Activated B cell treated with CpG ODN at 0.5 μM for 24 hours (primary cell): ENCODE measurements at regions of chr7 and their contacts with region 1.

Region 1: GRCh38 chr7:141014524-141015395 is at the start of gene MRPS33:
- DNase-seq: peak; percentile 86
- ATAC-seq: peak; percentile 98
- H3K4me3 Mint-ChIP-seq: peak within 1 kb of the TSS; percentile 99
- H3K27ac Mint-ChIP-seq: peak within 1 kb of the TSS; percentile 100
- H3K4me1 Mint-ChIP-seq: peaks cover 20% of the 10 kb centered on the region
- H3K27me3 Mint-ChIP-seq: peaks cover 13% of the 10 kb centered on the region
- CTCF ChIP-seq: no peak
- total RNA-seq, gene MRPS33: 37.5 and 46.4 TPM in 2 replicates

Region 2: DNA sequence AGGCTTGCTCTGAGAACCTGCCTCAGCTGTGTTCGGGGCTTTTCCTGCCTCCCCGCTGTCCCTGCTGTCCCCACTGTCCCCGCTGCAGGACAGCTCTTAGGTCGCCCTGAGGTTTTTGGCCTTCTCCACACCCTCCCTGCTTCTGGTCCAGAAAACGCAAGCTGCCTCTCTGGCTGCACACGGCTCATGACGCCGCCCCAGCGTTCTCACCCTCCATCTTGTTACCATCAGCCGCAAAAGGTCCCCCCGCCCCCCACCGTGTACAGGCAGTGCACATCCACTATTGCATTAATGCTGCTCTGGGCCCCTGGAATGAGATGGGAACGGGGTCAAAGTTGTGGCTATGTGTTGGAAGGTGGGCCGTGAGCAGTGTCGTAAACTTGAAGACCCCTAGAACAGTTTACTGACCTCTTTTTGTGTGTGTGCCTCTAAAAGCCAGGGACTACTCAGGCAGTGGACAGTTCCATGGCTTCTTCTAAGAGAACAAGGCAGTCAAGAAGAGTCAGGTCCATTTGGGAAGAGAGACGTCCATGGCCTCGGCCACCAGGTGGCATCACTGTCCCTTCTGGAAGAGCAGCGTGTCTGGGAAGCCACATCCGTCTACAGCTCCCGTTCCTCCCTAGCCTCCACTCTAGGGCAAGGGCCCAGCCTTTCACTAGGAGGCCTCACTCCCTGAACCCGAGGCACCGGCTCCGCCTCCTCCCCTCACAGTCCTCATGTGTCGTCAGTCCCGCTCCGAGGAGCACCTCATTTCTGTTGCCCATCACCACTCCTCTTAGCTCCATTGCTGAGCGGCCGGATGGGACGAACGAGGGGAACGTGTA is 497.0 kb before region 1 on chr7:
- CTCF ChIA-PET with region 1: interaction called, 7 read pairs
- POLR2A ChIA-PET with region 1: no interaction called
- intact Hi-C with region 1: loop called (anchors 1 kb)
- DNase-seq: peak; percentile 57
- ATAC-seq: peak; percentile 67
- H3K4me3 Mint-ChIP-seq: peak overlapping the region; percentile 42
- H3K27ac Mint-ChIP-seq: no peak overlapping the region
- H3K4me1 Mint-ChIP-seq: peaks cover 4% of the 10 kb centered on the region
- H3K27me3 Mint-ChIP-seq: peaks cover 11% of the 10 kb centered on the region
- CTCF ChIP-seq: no peak

Region 3: GRCh38 chr7:140673063-140673773 is 341.5 kb before region 1 on chr7:
- CTCF ChIA-PET with region 1: interaction called, 3 read pairs
- POLR2A ChIA-PET with region 1: interaction called, 4 read pairs
- intact Hi-C with region 1: loop called (anchors 1 kb)
- DNase-seq: peak; percentile 67
- ATAC-seq: peak; percentile 58
- H3K4me3 Mint-ChIP-seq: peak overlapping the region; percentile 88
- H3K27ac Mint-ChIP-seq: peak overlapping the region; percentile 86
- H3K4me1 Mint-ChIP-seq: peaks cover 57% of the 10 kb centered on the region
- H3K27me3 Mint-ChIP-seq: no peaks in the 10 kb centered on the region
- CTCF ChIP-seq: no peak

Region 4: DNA sequence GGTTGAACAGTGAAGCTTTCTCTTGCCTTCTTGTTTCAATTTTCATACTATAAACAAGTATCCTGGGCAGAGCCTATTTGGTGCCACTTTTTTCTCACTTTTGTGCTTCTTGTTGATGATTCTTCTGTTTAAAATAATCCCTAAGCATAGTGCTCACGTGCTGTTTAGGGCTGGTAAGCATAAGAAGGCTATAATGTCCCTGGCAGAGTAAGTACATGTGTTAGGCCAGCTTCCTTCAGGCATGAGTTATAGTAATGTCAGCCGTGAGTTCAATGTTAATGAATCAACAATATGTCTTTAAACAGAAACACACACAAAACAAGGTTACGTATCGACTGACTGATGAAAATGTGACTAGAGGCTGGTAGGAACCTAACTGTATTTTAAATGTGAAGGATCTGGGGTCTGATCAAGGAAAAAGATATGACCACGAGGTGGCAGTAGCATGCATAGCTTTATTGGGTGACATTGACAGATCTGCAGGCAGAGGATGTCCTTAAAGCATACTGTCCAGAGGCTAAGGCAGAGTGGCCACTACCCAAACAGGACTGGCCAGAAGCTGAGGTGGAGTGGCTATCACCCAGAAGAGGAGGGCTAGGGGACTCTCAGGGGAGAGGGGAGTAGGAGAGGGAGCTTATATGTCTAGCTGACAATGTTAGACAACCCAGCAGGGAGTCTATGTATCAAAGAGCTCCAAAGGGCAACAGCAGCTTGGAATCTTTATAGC is 203.8 kb before region 1 on chr7:
- CTCF ChIA-PET with region 1: interaction called, 151 read pairs
- POLR2A ChIA-PET with region 1: interaction called, 8 read pairs
- intact Hi-C with region 1: loop called (anchors 1 kb)
- DNase-seq: peak; percentile 30
- ATAC-seq: peak; percentile 84
- H3K4me3 Mint-ChIP-seq: no peak overlapping the region
- H3K27ac Mint-ChIP-seq: peak overlapping the region; percentile 59
- H3K4me1 Mint-ChIP-seq: peaks cover 1% of the 10 kb centered on the region
- H3K27me3 Mint-ChIP-seq: no peaks in the 10 kb centered on the region
- CTCF ChIP-seq: no peak

Region 5: DNA sequence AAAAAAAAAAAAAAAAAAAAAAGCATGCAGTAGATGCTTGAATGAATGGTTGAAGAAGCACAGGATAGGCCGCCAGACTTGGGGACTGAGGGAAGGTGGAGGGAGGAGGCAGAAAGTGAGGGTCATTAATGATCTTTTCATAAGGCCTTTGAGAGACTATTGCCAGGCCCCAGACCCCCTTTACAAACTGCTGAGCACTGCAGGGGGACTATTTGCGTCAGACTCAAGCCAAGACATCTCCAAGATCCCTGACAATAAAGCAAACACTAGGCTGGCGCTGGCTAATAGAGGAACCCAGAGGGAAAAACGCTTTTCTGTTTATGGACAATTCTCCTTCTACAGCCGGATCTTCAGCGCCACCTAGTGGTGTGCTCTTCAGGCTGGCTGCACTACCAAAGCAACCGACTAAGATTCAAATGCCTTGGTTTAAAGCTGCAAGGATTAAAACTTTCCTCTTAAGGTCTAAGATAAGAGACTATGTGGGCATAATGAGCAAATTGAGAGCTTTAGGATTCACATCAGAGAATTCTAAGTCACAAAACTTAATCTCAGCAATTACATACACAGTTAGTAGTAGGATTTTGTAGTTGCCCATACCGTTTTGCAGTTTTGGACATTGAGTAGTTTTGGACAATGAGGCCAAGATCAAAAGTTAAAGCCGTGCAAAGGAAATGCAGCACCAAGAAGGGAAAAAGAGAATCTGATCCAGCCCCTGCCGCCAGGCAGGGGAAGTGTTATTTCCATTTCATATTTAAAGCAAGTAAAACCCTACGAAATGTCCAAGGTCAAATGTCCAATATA is 518.6 kb after region 1 on chr7:
- CTCF ChIA-PET with region 1: no interaction called
- POLR2A ChIA-PET with region 1: no interaction called
- intact Hi-C with region 1: loop called (anchors 2 kb)
- DNase-seq: peak; percentile 29
- ATAC-seq: peak; percentile 45
- H3K4me3 Mint-ChIP-seq: no peak overlapping the region
- H3K27ac Mint-ChIP-seq: no peak overlapping the region
- H3K4me1 Mint-ChIP-seq: no peaks in the 10 kb centered on the region
- H3K27me3 Mint-ChIP-seq: peaks cover 23% of the 10 kb centered on the region
- CTCF ChIP-seq: peak; percentile 54

Region 6: GRCh38 chr7:141737834-141738591 is 723.3 kb after region 1 on chr7 and contains the start of gene SSBP1:
- CTCF ChIA-PET with region 1: interaction called, 3 read pairs
- POLR2A ChIA-PET with region 1: interaction called, 18 read pairs
- intact Hi-C with region 1: loop called (anchors 1 kb)
- DNase-seq: peak; percentile 79
- ATAC-seq: peak; percentile 89
- H3K4me3 Mint-ChIP-seq: peak within 1 kb of the TSS; percentile 99
- H3K27ac Mint-ChIP-seq: peak within 1 kb of the TSS; percentile 98
- H3K4me1 Mint-ChIP-seq: peaks cover 40% of the 10 kb centered on the region
- H3K27me3 Mint-ChIP-seq: no peaks in the 10 kb centered on the region
- CTCF ChIP-seq: peak; percentile 80
- total RNA-seq, gene SSBP1: 122 and 146 TPM in 2 replicates